ENCODE measurements at regions of chr4 and their contacts with region 1.

Region 1: DNA sequence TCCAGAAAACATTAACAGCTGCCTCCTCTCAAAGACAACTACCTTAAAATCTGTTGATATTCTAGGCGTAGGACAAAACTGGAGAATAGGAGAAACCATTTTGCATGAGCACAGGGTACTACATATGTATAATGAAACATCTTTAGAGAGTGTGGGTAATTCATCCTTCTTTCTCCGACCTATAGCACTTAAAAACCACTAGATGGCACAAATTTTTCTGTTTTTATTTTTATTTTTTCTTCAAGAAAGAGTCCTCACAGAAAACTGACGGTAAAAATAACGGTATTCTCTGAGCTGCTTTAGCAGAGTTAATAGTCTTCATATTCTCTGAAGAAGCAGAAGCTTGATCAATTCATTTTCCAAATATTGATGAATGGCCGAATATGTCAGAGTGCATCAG is 14.6 kb downstream of the SMIM31 start:
- DNase-seq: no peak
- ATAC-seq: peak; percentile 68
- H3K4me3 Mint-ChIP-seq: no peak overlapping the region
- H3K27ac Mint-ChIP-seq: no peak overlapping the region
- H3K4me1 Mint-ChIP-seq: peaks cover 9% of the 10 kb centered on the region; the same call in 1 of the 2 replicates
- H3K27me3 Mint-ChIP-seq: no peaks in the 10 kb centered on the region
- CTCF ChIP-seq: 0 out of 2 replicates have a peak, but pooled peaks have one; percentile 22

Region 2: GRCh38 chr4:164701665-164702064 is 66.9 kb before region 1 on chr4:
- CTCF ChIA-PET with region 1: no interaction called
- POLR2A ChIA-PET with region 1: no interaction called
- DNase-seq: no peak
- ATAC-seq: no peak
- H3K4me3 Mint-ChIP-seq: no peak overlapping the region
- H3K27ac Mint-ChIP-seq: no peak overlapping the region
- H3K4me1 Mint-ChIP-seq: no peaks in the 10 kb centered on the region
- H3K27me3 Mint-ChIP-seq: no peaks in the 10 kb centered on the region
- CTCF ChIP-seq: no peak

Region 3: DNA sequence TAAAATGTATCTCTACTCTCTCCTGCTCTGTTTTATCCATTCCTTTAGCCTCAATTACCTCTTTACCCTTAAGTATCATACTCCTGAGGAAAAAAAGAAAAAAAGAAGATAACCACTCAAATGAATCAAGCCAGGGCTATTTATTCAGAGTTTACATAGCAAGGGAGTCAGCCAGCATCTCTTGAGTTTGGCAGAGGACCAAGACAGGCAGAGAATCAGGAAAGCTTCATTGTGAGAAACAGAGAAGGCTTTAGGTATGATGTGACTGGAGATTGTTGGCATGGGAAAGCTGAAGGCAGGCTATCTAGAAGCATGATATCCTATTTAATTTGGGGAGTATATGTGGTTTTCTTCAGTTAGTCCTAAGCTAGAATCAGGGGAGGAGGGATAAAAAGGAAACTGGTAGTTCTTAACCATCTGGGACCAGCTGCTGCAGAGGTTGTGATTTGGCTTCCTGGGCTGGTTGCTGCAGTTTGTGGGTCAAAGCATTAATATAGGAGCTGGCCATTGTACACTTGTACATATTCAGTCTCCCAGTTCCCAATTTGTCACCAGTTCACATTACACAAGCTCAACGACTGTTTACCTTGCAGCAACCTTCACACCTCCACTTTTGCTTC is 119.7 kb after region 1 on chr4:
- CTCF ChIA-PET with region 1: interaction called, 11 read pairs
- POLR2A ChIA-PET with region 1: no interaction called
- DNase-seq: no peak
- ATAC-seq: no peak
- H3K4me3 Mint-ChIP-seq: no peak overlapping the region
- H3K27ac Mint-ChIP-seq: peak overlapping the region; percentile 20
- H3K4me1 Mint-ChIP-seq: peaks cover 11% of the 10 kb centered on the region
- H3K27me3 Mint-ChIP-seq: no peaks in the 10 kb centered on the region
- CTCF ChIP-seq: no peak

Region 4: DNA sequence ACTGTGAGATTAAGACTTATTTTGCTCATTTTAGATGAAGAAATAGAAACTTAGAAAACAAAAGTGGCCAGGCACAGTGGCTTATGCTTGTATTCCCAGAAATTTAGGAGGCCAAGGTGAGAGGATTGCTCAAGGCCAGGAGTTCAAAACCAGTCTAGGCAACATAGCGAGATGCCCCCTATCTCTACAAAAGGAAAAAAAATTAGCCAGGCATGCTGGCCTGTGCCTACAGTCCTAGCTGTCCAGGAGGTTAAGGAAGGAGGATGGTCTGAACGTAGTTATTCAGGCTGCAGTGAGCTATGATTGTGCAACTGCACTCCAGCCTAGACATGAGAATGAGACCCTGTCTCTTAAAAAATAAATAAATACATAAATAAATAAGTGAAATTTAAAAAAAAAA is 136.4 kb after region 1 on chr4:
- CTCF ChIA-PET with region 1: interaction called, 24 read pairs
- POLR2A ChIA-PET with region 1: interaction called, 4 read pairs
- DNase-seq: no peak
- ATAC-seq: no peak
- H3K4me3 Mint-ChIP-seq: no peak overlapping the region
- H3K27ac Mint-ChIP-seq: no peak overlapping the region
- H3K4me1 Mint-ChIP-seq: peaks cover 22% of the 10 kb centered on the region
- H3K27me3 Mint-ChIP-seq: no peaks in the 10 kb centered on the region
- CTCF ChIP-seq: no peak

Region 5: DNA sequence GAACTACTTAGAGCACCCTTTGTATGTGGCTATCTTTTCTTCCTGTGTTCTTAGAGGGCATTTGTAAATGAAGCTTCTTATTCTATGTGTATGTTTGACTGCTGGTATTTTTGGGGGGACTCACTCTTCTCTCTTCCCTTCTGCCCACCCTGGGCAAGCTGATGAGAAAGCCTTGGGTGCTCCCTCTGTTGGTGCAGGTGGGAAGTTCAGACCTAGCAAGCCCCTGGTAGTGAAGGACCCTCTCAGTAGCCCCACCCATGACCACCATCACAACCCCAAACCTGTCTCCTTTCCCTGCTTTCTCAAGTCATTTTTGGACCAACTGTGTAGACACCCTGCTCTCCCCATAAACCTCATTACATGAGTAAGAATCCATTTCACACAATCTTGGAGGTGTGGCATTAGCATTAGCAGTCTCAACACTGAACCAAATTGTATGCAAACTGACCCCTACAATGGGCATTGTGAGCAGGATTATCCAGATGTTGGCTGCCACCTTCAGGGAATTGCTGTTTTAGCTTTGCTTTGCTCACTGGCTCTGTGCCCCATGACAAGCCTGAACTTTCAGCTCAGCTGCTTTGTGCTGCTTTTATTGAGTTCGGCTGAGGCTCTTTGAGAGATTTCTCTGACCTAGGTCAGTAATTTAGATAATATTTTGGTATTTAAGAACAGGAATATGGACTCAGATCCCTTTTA is 181.1 kb after region 1 on chr4:
- CTCF ChIA-PET with region 1: interaction called, 23 read pairs
- POLR2A ChIA-PET with region 1: no interaction called
- DNase-seq: peak; percentile 65
- ATAC-seq: peak; percentile 93
- H3K4me3 Mint-ChIP-seq: no peak overlapping the region
- H3K27ac Mint-ChIP-seq: no peak overlapping the region
- H3K4me1 Mint-ChIP-seq: peaks cover 9% of the 10 kb centered on the region
- H3K27me3 Mint-ChIP-seq: no peaks in the 10 kb centered on the region; the same call in 1 of the 2 replicates
- CTCF ChIP-seq: peak; percentile 47; the same call in 1 of the 2 replicates

Region 6: GRCh38 chr4:165118256-165118909 is 349.9 kb after region 1 on chr4:
- CTCF ChIA-PET with region 1: no interaction called
- POLR2A ChIA-PET with region 1: no interaction called
- DNase-seq: no peak
- ATAC-seq: no peak
- H3K4me3 Mint-ChIP-seq: no peak overlapping the region
- H3K27ac Mint-ChIP-seq: no peak overlapping the region
- H3K4me1 Mint-ChIP-seq: peaks cover 5% of the 10 kb centered on the region
- H3K27me3 Mint-ChIP-seq: peaks cover 3% of the 10 kb centered on the region; the same call in 1 of the 2 replicates
- CTCF ChIP-seq: no peak

Measured in WTC11 (cell line).